ENCODE measurements at regions of chr21 and their contacts with region 1.

Region 1: GRCh38 chr21:33947451-33948095 is 32.0 kb upstream of the ATP5PO start:
- DNase-seq: peak; percentile 83
- H3K4me3 Mint-ChIP-seq: peak overlapping the region; percentile 71
- H3K27ac Mint-ChIP-seq: peak overlapping the region; percentile 100
- H3K4me1 Mint-ChIP-seq: peaks cover 65% of the 10 kb centered on the region
- H3K27me3 Mint-ChIP-seq: no peaks in the 10 kb centered on the region

Region 2: DNA sequence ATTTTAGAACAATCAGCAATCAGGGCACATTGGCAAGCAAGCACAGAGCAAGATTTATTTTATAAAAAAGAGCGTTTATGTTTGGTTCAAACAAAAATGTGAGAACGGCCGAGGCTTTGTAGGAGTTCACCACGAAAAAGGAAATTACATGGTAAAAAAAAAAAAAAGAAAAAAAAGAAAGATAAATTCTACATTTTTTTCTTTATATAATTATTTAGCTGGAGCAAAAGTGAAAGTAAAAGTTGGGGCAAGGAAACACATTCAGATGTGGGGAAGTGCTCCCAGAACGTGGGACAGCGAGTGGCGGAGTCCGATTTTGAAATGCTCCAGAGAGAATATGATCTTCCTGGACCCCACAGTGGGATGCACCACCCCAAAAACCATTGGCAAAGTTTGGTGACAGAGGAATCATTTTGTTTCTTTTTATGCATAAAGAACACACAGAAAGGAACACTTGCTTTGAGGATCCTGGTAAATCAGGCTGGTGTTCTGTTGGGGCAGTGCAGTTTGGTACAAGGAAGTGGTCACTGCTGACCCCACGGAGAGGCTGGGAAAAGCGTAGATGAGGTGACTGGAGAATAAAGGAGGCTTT is 15.7 kb before region 1 on chr21:
- intact Hi-C with region 1: loop called (anchors 2 kb)
- DNase-seq: peak; percentile 12
- H3K4me3 Mint-ChIP-seq: peak overlapping the region; percentile 98
- H3K27ac Mint-ChIP-seq: peak overlapping the region; percentile 98
- H3K4me1 Mint-ChIP-seq: peaks cover 41% of the 10 kb centered on the region
- H3K27me3 Mint-ChIP-seq: no peaks in the 10 kb centered on the region

Region 3: GRCh38 chr21:34008618-34009017 is 61.0 kb after region 1 on chr21:
- intact Hi-C with region 1: loop called (anchors 1 kb)
- DNase-seq: no peak
- H3K4me3 Mint-ChIP-seq: no peak overlapping the region
- H3K27ac Mint-ChIP-seq: peak overlapping the region; percentile 60
- H3K4me1 Mint-ChIP-seq: peaks cover 18% of the 10 kb centered on the region
- H3K27me3 Mint-ChIP-seq: no peaks in the 10 kb centered on the region

Region 4: GRCh38 chr21:34073032-34073869 is 125.7 kb after region 1 on chr21 and contains the starts of genes MRPS6 and SLC5A3:
- intact Hi-C with region 1: loop called (anchors 2 kb)
- DNase-seq: peak; percentile 68
- H3K4me3 Mint-ChIP-seq: peak within 1 kb of the TSS; percentile 95
- H3K27ac Mint-ChIP-seq: peak within 1 kb of the TSS; percentile 88
- H3K4me1 Mint-ChIP-seq: peaks cover 43% of the 10 kb centered on the region
- H3K27me3 Mint-ChIP-seq: no peaks in the 10 kb centered on the region
- total RNA-seq, gene MRPS6: 117 and 120 TPM in 2 replicates
- total RNA-seq, gene SLC5A3: 41.0 and 41.2 TPM in 2 replicates

Region 5: DNA sequence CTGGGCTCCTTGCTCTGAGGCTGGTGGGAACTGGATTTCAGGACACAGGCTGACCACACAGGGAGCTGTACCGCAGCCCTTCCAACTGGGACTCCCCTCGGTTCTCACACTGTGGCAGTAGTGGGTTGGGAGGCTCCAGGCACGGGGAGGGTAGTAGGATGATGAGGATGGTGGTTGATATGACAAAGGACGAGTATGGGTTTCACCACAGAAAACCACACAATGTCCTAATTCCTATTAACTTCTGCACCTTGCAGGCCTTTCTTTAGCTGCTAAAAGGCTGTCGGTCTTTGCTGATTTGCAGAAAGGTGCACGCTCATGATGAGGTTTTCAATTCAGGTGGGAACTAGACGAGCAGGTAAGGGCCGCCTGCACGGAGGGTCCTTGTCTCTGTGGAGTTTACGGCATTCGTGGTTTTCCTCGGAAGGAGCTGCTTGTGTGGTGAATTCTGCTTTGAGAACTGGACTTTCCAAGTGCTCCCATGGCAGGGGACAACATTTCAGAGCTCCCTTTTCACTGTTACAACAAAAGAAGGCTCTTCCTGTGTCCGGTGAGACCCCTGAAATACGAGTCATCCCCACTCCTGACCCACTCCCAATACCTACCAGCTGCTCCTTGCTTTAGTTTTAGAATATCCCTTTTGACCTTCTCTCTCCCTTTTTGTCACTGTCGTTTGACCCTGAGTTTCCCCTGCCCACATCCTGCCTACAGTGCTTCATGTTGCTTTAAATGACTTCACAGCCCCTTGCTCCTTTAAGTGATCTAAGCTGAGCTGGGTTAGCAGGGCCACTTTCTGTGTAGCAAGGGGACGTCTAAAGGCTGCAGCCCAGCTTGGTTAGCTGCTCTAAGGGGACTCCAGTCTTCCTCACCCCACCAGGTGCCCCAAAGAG is 250.9 kb after region 1 on chr21:
- intact Hi-C with region 1: loop called (anchors 5 kb)
- DNase-seq: peak; percentile 35
- H3K4me3 Mint-ChIP-seq: peak overlapping the region; percentile 26
- H3K27ac Mint-ChIP-seq: peak overlapping the region; percentile 94
- H3K4me1 Mint-ChIP-seq: peaks cover 55% of the 10 kb centered on the region
- H3K27me3 Mint-ChIP-seq: no peaks in the 10 kb centered on the region

Measured in activated T-helper 2 cell treated with anti-CD3 and anti-CD28 coated beads, Interferon-gamma antibody, Interleukin-2, Interleukin-4, amounts not matched to agents 10 μg/mL and 5 μg/mL and 100 μg/mL, durations not matched to agents 14 hours and 24 hours and 36 hours (primary cell).